BJ (cell line): ENCODE measurements at regions of chr2 and their contacts with region 1.

Region 1: DNA sequence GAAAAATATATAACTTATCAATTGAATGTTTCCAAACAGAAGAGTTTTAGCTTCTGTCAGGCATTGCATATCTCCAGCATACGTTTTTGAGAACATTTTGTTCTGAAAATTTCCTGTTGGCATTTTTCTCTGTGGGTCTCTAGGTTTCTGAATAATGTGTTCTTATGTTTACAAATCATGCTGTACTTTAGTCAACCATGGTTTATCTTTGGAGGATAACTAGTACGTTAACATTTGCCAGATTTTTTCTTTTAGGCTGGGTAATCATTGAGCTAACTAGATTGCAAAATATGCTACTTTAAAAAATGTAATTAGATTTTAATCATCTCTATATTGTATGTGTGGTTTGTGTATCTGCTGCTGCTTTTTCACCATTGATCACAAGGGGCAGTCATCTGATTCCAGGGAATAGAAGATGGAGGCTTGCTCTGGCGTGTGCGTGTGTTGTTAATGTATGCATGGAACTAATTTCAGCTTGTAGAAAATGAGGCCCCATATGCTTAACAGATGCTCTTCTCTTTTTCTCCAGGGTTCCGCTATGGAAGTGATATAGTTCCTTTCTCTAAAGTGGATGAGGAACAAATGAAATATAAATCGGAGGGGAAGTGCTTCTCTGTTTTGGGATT is 21.3 kb downstream of the XRCC5 start:
- DNase-seq: no peak
- H3K4me3 ChIP-seq: no peak overlapping the region
- H3K27me3 ChIP-seq: no peaks in the 10 kb centered on the region
- CTCF ChIP-seq: peak; percentile 26; the same call in 1 of the 2 replicates

Region 2: DNA sequence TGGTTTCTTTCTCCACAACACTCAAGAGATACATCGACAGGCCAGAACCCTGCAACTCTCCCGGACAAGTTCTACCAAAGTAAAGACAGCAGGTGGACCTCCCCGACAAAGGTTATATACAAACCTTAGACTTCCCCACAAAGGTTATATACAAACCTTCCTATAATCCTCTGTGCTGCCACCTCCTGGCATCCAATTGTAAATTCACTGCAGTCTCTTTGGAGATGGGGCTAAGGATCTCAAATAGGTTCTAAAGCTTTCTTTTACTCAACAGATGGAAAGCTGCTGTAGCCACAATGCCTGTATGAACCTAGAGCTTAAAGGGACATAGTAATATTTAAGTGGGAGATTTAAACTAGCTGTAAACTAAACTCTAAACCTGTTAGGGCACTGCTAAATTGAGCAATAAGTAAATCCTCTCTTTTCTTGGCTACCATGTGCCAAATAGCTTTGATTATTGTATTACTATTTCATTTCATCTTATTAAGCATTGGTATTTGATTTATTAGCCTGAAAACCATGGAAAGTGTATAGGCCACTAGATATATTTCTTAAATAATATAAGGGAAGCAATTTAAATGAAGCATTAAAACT is 107.3 kb before region 1 on chr2:
- CTCF ChIA-PET with region 1: no interaction called
- POLR2A ChIA-PET with region 1: no interaction called
- DNase-seq: no peak
- H3K4me3 ChIP-seq: no peak overlapping the region
- H3K27me3 ChIP-seq: no peaks in the 10 kb centered on the region
- CTCF ChIP-seq: peak; percentile 77

Region 3: GRCh38 chr2:216114714-216115557 is 15.5 kb before region 1 on chr2:
- CTCF ChIA-PET with region 1: interaction called, 10 read pairs
- POLR2A ChIA-PET with region 1: no interaction called
- DNase-seq: peak; percentile 91
- H3K4me3 ChIP-seq: peak overlapping the region; percentile 38
- H3K27me3 ChIP-seq: no peaks in the 10 kb centered on the region
- CTCF ChIP-seq: peak; percentile 92